ENCODE measurements at regions of chr16 and their contacts with region 1.

Region 1: GRCh38 chr16:31202414-31203375 is at the start of gene PYCARD:
- DNase-seq: no peak
- ATAC-seq: peak; percentile 23
- H3K4me3 ChIP-seq: peak within 1 kb of the TSS; percentile 61 to 77 (median 61)
- H3K27ac ChIP-seq: no peak within 1 kb of the TSS
- H3K4me1 ChIP-seq: peaks cover 57% of the 10 kb centered on the region
- H3K27me3 ChIP-seq: peaks cover 0 to 35% of the 10 kb centered on the region in 2 experiments; a peak in 4 of 5 replicates
- CTCF ChIP-seq: no peak
- EP300 ChIP-seq: no peak
- POLR2A ChIP-seq: peak in 1 of 2 experiments; percentile 38; a peak in 2 of 4 replicates
- RAD21 ChIP-seq: peak; percentile 19; the same call in 1 of the 2 replicates
- total RNA-seq, gene PYCARD: 4.4 and 4.8 TPM in 2 replicates

Region 2: DNA sequence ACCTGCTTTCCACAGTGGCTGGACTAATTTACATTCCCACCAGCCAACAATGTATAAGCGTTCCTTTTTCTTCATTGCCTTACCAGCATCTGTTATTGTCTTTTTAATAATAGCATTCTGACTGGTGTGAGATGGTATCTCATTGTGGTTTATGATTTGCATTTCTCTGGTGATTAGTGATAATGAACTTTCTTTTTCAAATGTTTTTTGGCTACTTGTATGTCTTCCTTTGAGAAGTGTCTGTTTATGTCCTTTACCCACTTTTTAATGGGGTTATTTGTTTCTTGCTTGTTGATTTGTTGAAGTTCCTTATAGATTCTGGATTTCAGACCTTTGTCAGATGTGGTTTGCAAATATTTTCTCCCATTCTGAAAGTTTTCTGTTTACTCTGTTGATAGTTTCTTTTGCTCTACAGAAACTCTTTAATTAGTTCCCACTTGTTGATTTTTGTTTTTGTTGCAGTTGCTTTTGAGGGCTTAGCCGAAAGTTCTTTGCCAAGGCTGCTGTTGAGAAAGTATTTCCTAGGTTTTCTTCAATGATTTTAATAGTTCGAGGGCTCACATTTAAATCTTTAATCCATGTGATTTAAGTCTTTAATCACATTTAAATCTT is 83.8 kb after region 1 on chr16:
- CTCF ChIA-PET with region 1: no interaction called
- POLR2A ChIA-PET with region 1: no interaction called
- in situ Hi-C with region 1: no loop called
- intact Hi-C with region 1: no loop called
- DNase-seq: no peak
- ATAC-seq: no peak
- H3K4me3 ChIP-seq: no peak overlapping the region
- H3K27ac ChIP-seq: no peak overlapping the region
- H3K4me1 ChIP-seq: peaks cover 18% of the 10 kb centered on the region
- H3K27me3 ChIP-seq: peaks cover 0 to 8% of the 10 kb centered on the region in 2 experiments; a peak in 1 of 5 replicates
- CTCF ChIP-seq: no peak
- EP300 ChIP-seq: no peak
- POLR2A ChIP-seq: no peak
- RAD21 ChIP-seq: no peak

Region 3: GRCh38 chr16:31427441-31428278 is 225.0 kb after region 1 on chr16:
- CTCF ChIA-PET with region 1: no interaction called
- POLR2A ChIA-PET with region 1: no interaction called
- in situ Hi-C with region 1: loop called (anchors 25 kb)
- intact Hi-C with region 1: no loop called
- DNase-seq: no peak
- ATAC-seq: no peak
- H3K4me3 ChIP-seq: no peak overlapping the region
- H3K27ac ChIP-seq: no peak overlapping the region
- H3K4me1 ChIP-seq: no peaks in the 10 kb centered on the region
- H3K27me3 ChIP-seq: peaks cover 0 to 19% of the 10 kb centered on the region in 2 experiments; a peak in 4 of 5 replicates
- CTCF ChIP-seq: no peak
- EP300 ChIP-seq: no peak
- POLR2A ChIP-seq: no peak
- RAD21 ChIP-seq: no peak

Measured in HepG2 (cell line).